Activated T-helper 2 cell treated with anti-CD3 and anti-CD28 coated beads, Interferon-gamma antibody, Interleukin-2, Interleukin-4, amounts not matched to agents 10 μg/mL and 5 μg/mL and 100 μg/mL, durations not matched to agents 14 hours and 24 hours and 36 hours (primary cell): ENCODE measurements at regions of chr17 and their contacts with region 1.

Region 1: GRCh38 chr17:34146440-34147043 is 108.5 kb upstream of the CCL2 start:
- DNase-seq: peak; percentile 46
- H3K4me3 Mint-ChIP-seq: no peak overlapping the region
- H3K27ac Mint-ChIP-seq: no peak overlapping the region
- H3K4me1 Mint-ChIP-seq: no peaks in the 10 kb centered on the region
- H3K27me3 Mint-ChIP-seq: peaks cover 2% of the 10 kb centered on the region

Region 2: GRCh38 chr17:33927732-33928133 is 218.8 kb before region 1 on chr17:
- intact Hi-C with region 1: loop called (anchors 10 kb)
- DNase-seq: no peak
- H3K4me3 Mint-ChIP-seq: no peak overlapping the region
- H3K27ac Mint-ChIP-seq: no peak overlapping the region
- H3K4me1 Mint-ChIP-seq: no peaks in the 10 kb centered on the region
- H3K27me3 Mint-ChIP-seq: no peaks in the 10 kb centered on the region

Region 3: DNA sequence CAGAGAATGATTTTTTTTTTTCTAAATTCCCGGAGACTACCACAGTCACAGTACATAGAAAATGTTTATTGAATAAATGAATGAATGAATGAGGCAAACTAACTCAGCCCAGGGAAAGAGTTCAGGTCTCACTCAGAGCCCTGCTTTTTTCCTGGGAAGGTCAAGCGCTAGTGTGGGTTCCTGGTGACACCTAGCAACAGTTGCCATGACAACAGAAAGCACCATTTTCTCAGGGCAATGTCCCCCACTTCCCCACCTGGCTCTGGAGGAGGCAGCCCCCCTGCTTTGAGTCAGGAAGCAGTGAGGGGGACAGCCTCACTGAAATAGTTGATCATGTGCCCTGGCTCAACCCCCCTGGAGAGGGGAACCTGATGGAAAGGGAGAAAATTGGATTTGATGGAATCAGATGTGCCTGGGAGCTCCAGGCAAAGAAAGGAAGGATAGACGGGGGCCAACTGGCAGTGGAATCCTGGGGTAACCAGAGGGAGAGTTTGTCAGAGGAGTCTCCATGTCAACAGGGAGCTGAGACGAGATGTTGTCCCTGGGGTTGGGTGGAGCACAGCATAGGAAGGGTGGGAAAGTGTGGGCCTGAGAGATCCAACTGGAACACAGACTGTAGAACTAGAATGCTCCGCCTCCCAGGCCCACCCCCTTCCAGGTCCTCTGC is 133.7 kb before region 1 on chr17:
- intact Hi-C with region 1: no loop called
- DNase-seq: no peak
- H3K4me3 Mint-ChIP-seq: no peak overlapping the region
- H3K27ac Mint-ChIP-seq: no peak overlapping the region
- H3K4me1 Mint-ChIP-seq: no peaks in the 10 kb centered on the region
- H3K27me3 Mint-ChIP-seq: peaks cover 1% of the 10 kb centered on the region